Heart right ventricle (tissue), 16 donors: ENCODE measurements at regions of chr13 and their contacts with region 1.

Region 1: DNA sequence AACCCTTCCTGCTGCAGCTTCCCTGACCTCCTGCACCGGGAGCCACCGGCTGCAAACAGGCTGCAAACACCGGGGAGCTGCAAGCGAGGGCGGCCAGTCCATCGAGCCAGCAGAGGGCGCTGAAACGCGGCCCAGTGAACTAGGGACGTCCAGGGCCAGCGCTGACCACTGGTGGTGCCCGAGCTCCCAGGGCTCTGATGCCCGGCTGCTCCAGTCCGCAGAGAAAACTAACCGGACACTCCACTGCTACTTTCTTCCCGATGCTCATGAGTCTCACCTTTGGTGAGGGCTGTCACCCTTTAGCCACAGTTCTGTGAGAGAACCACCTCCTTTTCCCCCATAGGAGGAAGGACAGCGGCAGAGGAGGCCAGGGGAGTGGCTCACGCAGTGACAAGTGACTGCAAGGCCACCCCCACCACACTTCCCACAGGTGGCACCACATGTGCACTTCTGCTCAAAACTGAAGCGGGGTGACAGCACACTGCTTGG is 82.8 kb upstream of the MTIF3 start:
- DNase-seq: peak; percentile 79 to 90
- ATAC-seq: peak; percentile 90 to 98 (median 97)
- H3K4me3 ChIP-seq: peak overlapping the region in 8 of 10 donors; percentile 12 to 43 (median 36)
- H3K27ac ChIP-seq: no peak overlapping the region
- H3K4me1 ChIP-seq: peaks cover 0 to 8% (median 0%) of the 10 kb centered on the region in 9 donors
- H3K27me3 ChIP-seq: peaks cover 0 to 5% (median 0%) of the 10 kb centered on the region in 7 donors
- CTCF ChIP-seq: peak; percentile 82 to 98 (median 94)

Region 2: GRCh38 chr13:26929971-26930730 is 603.0 kb before region 1 on chr13:
- intact Hi-C with region 1: no loop called
- DNase-seq: peak; percentile 51 to 76
- ATAC-seq: peak in 7 of 8 donors; percentile 62 to 81 (median 71)
- H3K4me3 ChIP-seq: no peak overlapping the region
- H3K27ac ChIP-seq: no peak overlapping the region
- H3K4me1 ChIP-seq: peaks cover 0 to 5% (median 0%) of the 10 kb centered on the region in 9 donors
- H3K27me3 ChIP-seq: peaks cover 0 to 22% (median 4%) of the 10 kb centered on the region in 7 donors
- CTCF ChIP-seq: peak; percentile 91 to 98 (median 96)

Region 3: DNA sequence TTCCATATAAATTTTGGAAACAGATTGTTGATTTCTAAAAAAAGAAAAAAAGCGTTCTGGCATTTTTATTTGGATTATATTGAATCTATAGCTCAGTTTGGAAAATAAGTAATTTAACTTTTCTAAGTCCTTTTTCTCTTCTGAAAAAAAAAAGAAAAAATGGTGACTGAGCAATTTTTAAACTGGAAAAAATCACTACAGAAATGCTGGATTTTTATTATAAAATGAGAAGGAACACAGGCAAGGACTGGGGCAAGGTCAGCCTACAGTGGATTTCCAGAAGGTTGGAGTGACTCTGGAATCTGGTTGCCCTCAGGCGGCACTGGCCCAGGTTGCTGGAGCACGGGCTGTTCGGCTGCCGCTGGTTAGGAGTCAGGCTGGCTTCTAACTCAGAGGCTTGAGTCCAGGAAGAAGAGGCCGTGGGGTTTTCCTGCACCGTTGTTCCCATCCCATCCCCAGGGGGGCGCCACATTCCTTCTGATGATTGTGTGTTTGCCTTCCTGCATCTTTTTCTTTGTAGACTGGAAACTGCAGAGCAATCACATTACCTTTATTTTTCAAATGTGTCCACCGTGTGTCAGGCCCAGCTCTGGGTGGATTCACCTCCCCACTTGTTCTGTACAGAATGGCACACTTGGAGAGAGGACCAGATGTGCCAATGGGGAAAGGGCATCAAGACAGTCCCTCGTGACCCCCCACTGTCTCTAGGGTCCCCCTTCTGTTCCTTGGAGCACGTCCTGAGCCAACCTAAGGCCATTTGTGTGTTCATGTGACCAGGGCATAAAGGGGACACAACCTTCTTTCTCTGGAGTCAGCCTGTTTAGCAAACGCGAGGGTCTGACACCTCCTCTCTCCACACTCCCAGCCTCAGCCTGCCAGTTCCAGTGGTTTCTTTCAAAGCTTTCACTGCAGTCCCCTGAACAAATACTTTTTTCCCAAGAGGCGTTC is 153.2 kb before region 1 on chr13:
- intact Hi-C with region 1: loop called in 8 of 10 experiments (anchors 2 to 10 kb)
- DNase-seq: peak in 1 of 2 donors; percentile 39
- ATAC-seq: peak in 3 of 8 donors; percentile 52 to 71 (median 54)
- H3K4me3 ChIP-seq: no peak overlapping the region
- H3K27ac ChIP-seq: no peak overlapping the region
- H3K4me1 ChIP-seq: peaks cover 0 to 1% (median 0%) of the 10 kb centered on the region in 9 donors
- H3K27me3 ChIP-seq: peaks cover 0 to 49% (median 11%) of the 10 kb centered on the region in 7 donors
- CTCF ChIP-seq: peak; percentile 19 to 64 (median 57)

Region 4: GRCh38 chr13:27620377-27621115 is 87.3 kb after region 1 on chr13 and contains the start of gene LNX2:
- intact Hi-C with region 1: loop called in 1 of 10 experiments (anchors 5 kb)
- DNase-seq: peak; percentile 98 to 99
- ATAC-seq: peak; percentile 97 to 99 (median 98)
- H3K4me3 ChIP-seq: peak within 1 kb of the TSS; percentile 58 to 100 (median 92)
- H3K27ac ChIP-seq: peak within 1 kb of the TSS; percentile 90 to 99 (median 96)
- H3K4me1 ChIP-seq: peaks cover 4 to 49% (median 31%) of the 10 kb centered on the region in 9 donors
- H3K27me3 ChIP-seq: no peaks in the 10 kb centered on the region
- CTCF ChIP-seq: no peak
- total RNA-seq, gene LNX2: 10.2 to 22.3 (median 15.4) TPM

Region 5: DNA sequence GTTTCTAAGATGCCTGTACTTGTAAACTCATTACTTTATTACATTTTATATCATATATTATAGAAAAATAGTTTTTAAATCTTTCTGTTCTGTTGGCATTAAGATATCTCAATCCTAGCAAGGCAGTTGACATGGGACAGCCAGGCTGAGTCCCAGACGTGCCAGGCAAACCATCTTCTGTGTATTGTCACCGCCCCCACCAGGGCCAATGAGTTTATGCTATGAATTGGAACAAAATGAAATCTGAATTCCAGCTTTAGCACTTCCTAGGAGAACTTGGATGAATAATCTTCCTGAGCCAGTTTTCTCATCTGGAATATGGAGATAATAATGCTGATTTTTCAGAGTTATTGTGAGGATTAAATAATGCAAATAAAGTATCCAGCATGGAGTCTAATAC is 179.2 kb after region 1 on chr13:
- intact Hi-C with region 1: loop called in 8 of 10 experiments (anchors 2 to 10 kb)
- DNase-seq: peak; percentile 12 to 17
- ATAC-seq: peak in 2 of 8 donors; percentile 35 to 70
- H3K4me3 ChIP-seq: no peak overlapping the region
- H3K27ac ChIP-seq: no peak overlapping the region
- H3K4me1 ChIP-seq: no peaks in the 10 kb centered on the region
- H3K27me3 ChIP-seq: peaks cover 0 to 14% (median 0%) of the 10 kb centered on the region in 7 donors
- CTCF ChIP-seq: peak; percentile 20 to 59 (median 43)

Region 6: GRCh38 chr13:27826379-27827353 is 293.5 kb after region 1 on chr13:
- intact Hi-C with region 1: loop called (anchors 1 to 10 kb)
- DNase-seq: peak; percentile 74 to 76
- ATAC-seq: peak; percentile 87 to 95 (median 91)
- H3K4me3 ChIP-seq: peak overlapping the region in 7 of 10 donors; percentile 4 to 37 (median 23)
- H3K27ac ChIP-seq: no peak overlapping the region
- H3K4me1 ChIP-seq: peaks cover 0 to 18% (median 8%) of the 10 kb centered on the region in 9 donors
- H3K27me3 ChIP-seq: peaks cover 0 to 100% (median 89%) of the 10 kb centered on the region in 7 donors
- CTCF ChIP-seq: peak; percentile 82 to 97 (median 92)